Panc1 (cell line): ENCODE measurements at regions of chr5 and their contacts with region 1.

Region 1: DNA sequence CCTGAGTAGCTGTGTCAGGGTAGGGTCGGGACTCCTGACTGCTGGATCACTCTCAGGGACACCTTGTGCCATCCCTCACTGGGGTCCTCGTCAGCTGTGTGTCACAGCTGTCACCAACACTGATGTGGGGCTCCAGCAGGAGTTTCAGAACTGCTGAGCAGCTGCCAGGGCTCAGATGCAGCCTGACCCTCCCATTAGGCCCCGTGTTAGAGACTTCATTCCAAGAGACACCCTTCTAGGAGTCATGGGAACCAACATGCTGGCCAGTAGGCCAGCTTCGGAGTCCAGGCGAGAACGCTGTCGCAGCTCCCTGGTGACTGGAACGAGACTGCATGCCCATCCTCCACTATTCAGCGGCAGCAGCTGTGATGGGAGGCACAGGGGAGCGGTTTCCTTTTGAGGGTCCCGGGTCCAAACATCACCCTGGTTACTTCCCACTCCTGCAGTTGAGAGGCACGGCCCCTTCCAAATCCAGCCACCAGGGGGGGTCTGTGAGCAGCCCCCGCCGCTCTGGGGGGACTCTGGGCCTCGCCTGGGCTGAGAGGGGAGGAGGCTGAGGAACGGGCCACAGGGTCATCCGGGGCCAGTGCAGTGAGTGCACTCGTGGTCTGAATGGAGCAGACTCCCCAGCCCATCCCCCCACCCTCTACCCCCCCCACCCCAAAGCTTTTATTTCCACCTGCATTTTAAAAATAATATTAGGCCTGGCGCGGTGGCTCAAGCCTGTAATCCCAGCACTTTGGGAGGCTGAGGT is 12.6 kb upstream of the TCF7 start:
- DNase-seq: no peak
- ATAC-seq: peak; percentile 81
- H3K4me3 ChIP-seq: no peak overlapping the region
- H3K27ac ChIP-seq: peak overlapping the region; percentile 44; the same call in 1 of the 2 replicates
- H3K4me1 ChIP-seq: peaks cover 20% of the 10 kb centered on the region
- H3K27me3 ChIP-seq: no peaks in the 10 kb centered on the region
- CTCF ChIP-seq: peak; percentile 98

Region 2: GRCh38 chr5:134063188-134063820 is 38.6 kb before region 1 on chr5:
- CTCF ChIA-PET with region 1: interaction called, 10 read pairs
- POLR2A ChIA-PET with region 1: no interaction called
- in situ Hi-C with region 1: no loop called
- intact Hi-C with region 1: no loop called
- DNase-seq: no peak
- ATAC-seq: no peak
- H3K4me3 ChIP-seq: no peak overlapping the region
- H3K27ac ChIP-seq: no peak overlapping the region
- H3K4me1 ChIP-seq: peaks cover 12% of the 10 kb centered on the region
- H3K27me3 ChIP-seq: no peaks in the 10 kb centered on the region
- CTCF ChIP-seq: no peak